ENCODE measurements at regions of chr19 and their contacts with region 1.

Region 1: GRCh38 chr19:50817941-50818858 is 5.4 kb downstream of the KLK1 start:
- DNase-seq: peak; percentile 63
- ATAC-seq: peak; percentile 87
- H3K4me3 ChIP-seq: peak overlapping the region; percentile 97
- H3K27ac ChIP-seq: peak overlapping the region; percentile 93
- H3K4me1 ChIP-seq: peaks cover 36% of the 10 kb centered on the region
- H3K27me3 ChIP-seq: no peaks in the 10 kb centered on the region
- CTCF ChIP-seq: no peak
- EP300 ChIP-seq: no peak
- POLR2A ChIP-seq: peak; percentile 67; the same call in 1 of the 2 replicates
- RAD21 ChIP-seq: no peak

Region 2: GRCh38 chr19:50777754-50778303 is 40.4 kb before region 1 on chr19:
- CTCF ChIA-PET with region 1: no interaction called
- POLR2A ChIA-PET with region 1: no interaction called
- RAD21 ChIA-PET with region 1: no interaction called
- SMC1A ChIA-PET with region 1: no interaction called
- in situ Hi-C with region 1: no loop called
- intact Hi-C with region 1: no loop called
- DNase-seq: no peak
- ATAC-seq: no peak
- H3K4me3 ChIP-seq: no peak overlapping the region
- H3K27ac ChIP-seq: no peak overlapping the region
- H3K4me1 ChIP-seq: no peaks in the 10 kb centered on the region
- H3K27me3 ChIP-seq: peaks cover 4 to 8% of the 10 kb centered on the region in 2 experiments
- CTCF ChIP-seq: no peak
- EP300 ChIP-seq: no peak
- POLR2A ChIP-seq: no peak
- RAD21 ChIP-seq: no peak

Region 3: GRCh38 chr19:50804420-50805272 is 13.6 kb before region 1 on chr19:
- CTCF ChIA-PET with region 1: interaction called, 8 read pairs
- POLR2A ChIA-PET with region 1: interaction called, 19 read pairs
- RAD21 ChIA-PET with region 1: interaction called, 5 read pairs
- SMC1A ChIA-PET with region 1: interaction called, 5 read pairs
- in situ Hi-C with region 1: no loop called
- intact Hi-C with region 1: loop called (anchors 1 kb)
- DNase-seq: peak; percentile 91
- ATAC-seq: peak; percentile 95
- H3K4me3 ChIP-seq: peak overlapping the region; percentile 98
- H3K27ac ChIP-seq: peak overlapping the region; percentile 97
- H3K4me1 ChIP-seq: peaks cover 7% of the 10 kb centered on the region
- H3K27me3 ChIP-seq: no peaks in the 10 kb centered on the region
- CTCF ChIP-seq: no peak
- EP300 ChIP-seq: no peak
- POLR2A ChIP-seq: peak; percentile 97
- RAD21 ChIP-seq: 0 out of 2 replicates have a peak, but pooled peaks have one; percentile 8

Region 4: DNA sequence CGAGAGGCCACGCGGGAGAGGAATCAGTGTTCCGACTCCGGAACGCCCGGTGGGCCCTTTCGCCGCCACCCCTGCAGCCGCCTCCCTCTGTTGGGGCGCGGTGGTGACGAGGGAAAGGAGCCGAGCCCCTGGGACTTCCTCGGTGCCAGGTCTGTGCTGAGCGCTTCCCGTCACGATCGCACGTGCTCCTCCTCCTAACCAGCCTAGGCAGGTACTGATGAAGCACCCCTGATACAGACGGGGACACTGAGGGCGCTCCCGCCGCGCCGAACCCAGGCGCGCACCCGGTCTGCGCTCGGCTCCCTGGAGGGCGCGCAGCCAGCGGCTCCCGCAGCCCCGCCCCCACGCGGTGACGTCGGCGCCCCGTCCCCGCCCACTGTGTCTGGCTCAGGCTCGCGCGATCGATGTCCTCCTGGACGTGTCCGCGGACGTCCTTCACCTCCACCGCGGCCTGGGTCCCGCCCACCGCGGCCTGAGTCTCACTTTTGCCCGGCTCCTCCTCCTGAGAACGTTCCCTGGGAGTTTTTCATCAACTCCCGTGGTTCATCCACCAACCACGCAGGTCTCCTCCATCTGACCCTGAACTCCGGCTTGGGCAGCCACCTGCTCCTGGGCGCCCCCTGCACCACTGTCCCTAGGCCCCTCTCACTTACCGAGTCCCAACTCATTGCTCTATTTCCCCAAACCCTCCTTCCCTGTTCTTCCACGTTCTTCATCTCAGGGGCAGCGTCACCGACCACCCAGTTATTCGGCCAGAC is 17.8 kb after region 1 on chr19:
- CTCF ChIA-PET with region 1: interaction called, 6 read pairs
- POLR2A ChIA-PET with region 1: interaction called, 5 read pairs
- RAD21 ChIA-PET with region 1: interaction called, 7 read pairs
- SMC1A ChIA-PET with region 1: interaction called, 4 read pairs
- in situ Hi-C with region 1: no loop called
- intact Hi-C with region 1: loop called (anchors 2 kb)
- DNase-seq: peak; percentile 26
- ATAC-seq: peak; percentile 96
- H3K4me3 ChIP-seq: peak overlapping the region; percentile 71
- H3K27ac ChIP-seq: no peak overlapping the region
- H3K4me1 ChIP-seq: peaks cover 5% of the 10 kb centered on the region; the same call in 1 of the 2 replicates
- H3K27me3 ChIP-seq: no peaks in the 10 kb centered on the region
- CTCF ChIP-seq: no peak
- EP300 ChIP-seq: no peak
- POLR2A ChIP-seq: peak; percentile 89
- RAD21 ChIP-seq: no peak

Region 5: DNA sequence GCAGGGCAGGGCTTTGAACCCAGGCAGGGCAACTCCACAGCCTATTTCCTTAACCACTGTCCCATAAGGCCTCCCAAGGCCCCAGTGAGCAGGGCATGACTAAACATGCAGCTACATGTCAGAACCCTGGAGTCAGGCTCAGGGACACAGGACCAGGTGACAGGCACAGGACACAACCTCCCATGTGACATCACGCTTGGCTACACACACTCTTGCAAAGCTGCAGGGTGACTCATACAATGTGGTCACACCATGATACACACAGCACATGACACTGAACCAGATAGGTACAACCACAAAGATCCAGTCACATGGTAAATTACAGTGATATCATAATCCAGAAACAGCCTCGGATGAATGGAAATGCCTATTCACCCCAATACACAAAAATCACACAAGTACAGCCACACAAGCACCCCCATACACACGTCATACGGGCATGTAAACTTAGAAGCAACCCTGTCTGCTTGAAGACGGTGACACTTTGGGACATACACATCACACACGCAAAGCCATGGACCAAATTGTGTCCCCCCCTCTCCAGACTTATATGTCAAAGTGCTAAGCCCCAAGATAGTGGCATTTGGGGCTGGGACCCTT is 78.5 kb after region 1 on chr19:
- CTCF ChIA-PET with region 1: interaction called, 15 read pairs
- POLR2A ChIA-PET with region 1: interaction called, 13 read pairs
- RAD21 ChIA-PET with region 1: interaction called, 11 read pairs
- SMC1A ChIA-PET with region 1: interaction called, 16 read pairs
- in situ Hi-C with region 1: no loop called
- intact Hi-C with region 1: loop called (anchors 2 kb)
- DNase-seq: peak; percentile 100
- ATAC-seq: peak; percentile 96
- H3K4me3 ChIP-seq: peak overlapping the region; percentile 22; the same call in 1 of the 2 replicates
- H3K27ac ChIP-seq: peak overlapping the region; percentile 76
- H3K4me1 ChIP-seq: peaks cover 23% of the 10 kb centered on the region
- H3K27me3 ChIP-seq: no peaks in the 10 kb centered on the region
- CTCF ChIP-seq: no peak
- EP300 ChIP-seq: peak; percentile 98 to 100
- POLR2A ChIP-seq: peak; percentile 51
- RAD21 ChIP-seq: no peak

Region 6: DNA sequence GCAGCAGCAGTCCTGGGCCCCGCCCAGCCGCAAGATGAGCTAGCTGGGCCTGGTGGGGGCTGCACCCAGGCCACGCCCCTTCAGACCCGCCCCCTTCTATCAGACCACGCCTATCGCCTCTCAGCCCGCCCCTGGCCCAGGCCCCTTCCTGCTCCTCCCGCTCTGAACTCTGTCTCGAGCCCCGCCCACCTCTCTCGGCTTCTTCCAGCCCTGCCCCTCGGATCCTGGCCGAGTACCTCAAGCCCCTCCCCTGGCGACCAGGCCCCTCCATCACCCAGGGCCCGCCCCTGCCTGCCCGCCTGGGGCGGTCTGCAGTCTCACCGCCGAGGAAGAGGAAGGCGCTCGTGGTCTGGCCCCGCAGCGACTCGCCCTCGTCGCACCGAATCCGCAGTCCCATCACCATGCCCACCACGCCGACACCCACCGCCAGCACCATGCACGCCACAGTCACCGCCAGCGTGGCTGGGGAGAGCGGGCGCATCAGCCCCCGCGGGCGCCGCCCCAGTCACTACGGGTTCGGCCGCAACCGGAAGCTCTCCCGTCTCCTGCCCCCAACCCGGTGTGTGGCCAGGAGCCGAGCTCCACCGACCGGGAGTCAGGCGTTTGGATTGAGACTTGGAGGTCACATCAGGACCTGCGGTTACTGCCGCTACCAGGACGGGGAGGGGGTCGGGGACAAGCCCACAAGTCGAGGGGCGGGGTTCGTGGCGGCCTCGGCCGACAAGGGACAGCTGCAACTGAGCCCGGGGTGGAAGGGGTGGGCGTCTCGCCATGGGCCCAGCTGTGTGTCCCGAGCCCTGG is 549.6 kb after region 1 on chr19:
- CTCF ChIA-PET with region 1: no interaction called
- POLR2A ChIA-PET with region 1: no interaction called
- RAD21 ChIA-PET with region 1: no interaction called
- SMC1A ChIA-PET with region 1: no interaction called
- in situ Hi-C with region 1: loop called (anchors 10 kb)
- intact Hi-C with region 1: no loop called
- DNase-seq: peak; percentile 96
- ATAC-seq: peak; percentile 88
- H3K4me3 ChIP-seq: peak overlapping the region; percentile 82
- H3K27ac ChIP-seq: peak overlapping the region; percentile 56
- H3K4me1 ChIP-seq: peaks cover 24% of the 10 kb centered on the region
- H3K27me3 ChIP-seq: no peaks in the 10 kb centered on the region
- CTCF ChIP-seq: no peak
- EP300 ChIP-seq: no peak
- POLR2A ChIP-seq: peak; percentile 87
- RAD21 ChIP-seq: no peak